Left lung (tissue), 14 donors: ENCODE measurements at regions of chr3 and their contacts with region 1.

Region 1: GRCh38 chr3:120417272-120417911 is 33.4 kb downstream of the FSTL1 start:
- DNase-seq: peak in 3 of 4 donors; percentile 93 to 98 (median 93)
- ATAC-seq: peak; percentile 98
- H3K4me3 ChIP-seq: peak overlapping the region; percentile 2 to 30
- H3K27ac ChIP-seq: peak overlapping the region; percentile 60 to 82
- H3K4me1 ChIP-seq: peaks cover 2 to 25% of the 10 kb centered on the region in 2 donors
- H3K27me3 ChIP-seq: no peaks in the 10 kb centered on the region
- CTCF ChIP-seq: peak; percentile 68 to 80

Region 2: GRCh38 chr3:120239644-120240043 is 177.7 kb before region 1 on chr3:
- intact Hi-C with region 1: loop called in 1 of 2 experiments (anchors 5 kb)
- DNase-seq: no peak
- ATAC-seq: no peak
- H3K4me3 ChIP-seq: no peak overlapping the region
- H3K27ac ChIP-seq: no peak overlapping the region
- H3K4me1 ChIP-seq: no peaks in the 10 kb centered on the region
- H3K27me3 ChIP-seq: no peaks in the 10 kb centered on the region
- CTCF ChIP-seq: no peak